GM13977 (cell line): ENCODE measurements at regions of chr21 and their contacts with region 1.

Region 1: DNA sequence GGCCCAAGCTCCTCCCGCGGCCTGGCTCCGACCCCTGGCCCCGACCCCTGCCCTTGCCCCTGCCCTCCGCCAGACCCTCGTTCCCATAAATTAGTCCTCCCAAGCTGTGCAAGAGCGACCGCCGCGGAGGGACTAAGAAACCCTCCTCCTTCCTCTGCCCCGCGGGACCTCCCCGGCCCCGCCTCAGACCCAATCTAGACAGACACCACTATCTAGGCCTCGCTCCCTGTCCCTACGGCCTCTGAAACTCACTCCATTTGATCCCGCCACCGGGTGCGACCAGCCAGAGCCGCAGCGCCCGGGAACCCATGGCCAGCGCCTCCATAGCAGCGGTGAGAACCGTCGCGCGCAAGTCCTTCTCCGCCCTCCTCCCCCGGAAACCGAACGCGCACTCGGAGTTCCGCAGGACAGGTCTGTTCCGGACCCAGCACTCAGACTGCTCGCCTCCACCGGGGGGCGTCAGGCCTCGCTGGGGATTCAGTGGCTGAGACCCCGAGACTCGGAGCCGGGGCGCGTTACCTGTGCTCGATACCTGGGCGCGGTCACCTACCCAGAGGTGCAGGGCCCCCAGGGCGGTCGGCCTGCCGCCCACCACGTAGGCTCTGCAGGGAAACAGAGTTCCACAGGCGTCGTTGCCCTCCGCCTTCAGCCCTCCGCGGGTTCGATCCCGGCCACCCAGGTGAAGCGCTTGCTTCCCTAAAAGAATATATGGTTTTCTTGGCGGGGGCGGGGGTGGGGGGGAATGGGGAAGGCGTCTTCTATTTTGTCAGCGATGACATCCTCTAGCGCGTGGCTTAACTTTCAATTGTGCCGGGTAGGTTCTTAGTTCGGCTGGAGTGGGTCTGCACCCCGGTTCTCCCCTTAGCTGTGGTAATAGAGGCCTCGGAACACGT is at the start of gene MRPL39:
- DNase-seq: peak; percentile 92
- CTCF ChIP-seq: peak; percentile 88

Region 2: DNA sequence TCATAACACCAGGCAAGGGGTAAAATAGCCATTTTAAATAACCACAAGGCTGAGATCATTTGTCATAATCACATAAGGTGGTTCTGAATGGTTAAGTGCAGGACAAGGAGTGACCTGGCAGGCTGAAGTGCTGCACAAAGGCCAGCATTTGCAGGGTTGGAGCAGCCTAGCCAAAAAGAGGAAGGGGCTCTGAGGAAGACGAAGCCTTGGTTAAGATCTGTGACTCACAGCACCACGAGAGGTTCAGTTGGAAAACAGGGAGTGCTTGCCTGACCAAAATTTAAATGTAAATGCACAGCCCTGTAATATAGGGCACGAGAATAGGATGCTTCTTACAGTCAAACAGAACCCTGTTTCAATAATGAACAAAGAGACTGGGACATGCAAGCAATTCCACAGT is 115.2 kb after region 1 on chr21:
- in situ Hi-C with region 1: loop called (anchors 10 kb)
- DNase-seq: no peak
- CTCF ChIP-seq: no peak

Region 3: DNA sequence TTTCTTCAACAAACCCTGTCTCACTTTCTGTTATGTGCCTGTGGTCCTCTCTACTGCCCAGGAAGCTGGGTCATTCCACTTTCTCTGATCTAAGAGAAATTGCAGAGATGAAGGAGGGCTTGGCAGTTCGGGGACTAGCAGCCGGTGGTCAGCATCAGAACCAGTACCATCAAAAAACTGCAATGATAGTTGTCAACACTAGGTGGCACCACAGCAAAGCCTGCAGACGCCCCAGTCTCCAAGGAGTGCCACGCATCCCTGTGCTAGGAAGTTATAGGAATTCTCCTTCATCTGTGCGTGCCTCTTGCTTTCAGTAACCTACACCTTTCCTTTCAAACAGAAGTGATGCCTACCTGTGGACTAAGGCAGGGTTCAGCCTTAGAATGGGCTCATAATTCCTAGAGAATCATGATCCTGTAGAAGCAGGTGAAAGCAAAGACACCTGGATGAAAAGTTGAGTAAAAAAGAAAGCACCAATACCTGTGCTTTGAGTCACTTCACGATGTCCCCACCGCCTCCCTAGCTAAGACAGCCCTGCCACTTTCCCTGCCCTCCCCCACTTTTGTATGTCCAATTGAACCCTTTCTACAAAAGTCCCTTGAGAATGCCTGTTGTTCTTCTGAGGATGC is 1108.6 kb after region 1 on chr21:
- in situ Hi-C with region 1: loop called (anchors 25 kb)
- DNase-seq: peak; percentile 25
- CTCF ChIP-seq: peak; percentile 63